ENCODE measurements at regions of chr21 and their contacts with region 1.

Region 1: DNA sequence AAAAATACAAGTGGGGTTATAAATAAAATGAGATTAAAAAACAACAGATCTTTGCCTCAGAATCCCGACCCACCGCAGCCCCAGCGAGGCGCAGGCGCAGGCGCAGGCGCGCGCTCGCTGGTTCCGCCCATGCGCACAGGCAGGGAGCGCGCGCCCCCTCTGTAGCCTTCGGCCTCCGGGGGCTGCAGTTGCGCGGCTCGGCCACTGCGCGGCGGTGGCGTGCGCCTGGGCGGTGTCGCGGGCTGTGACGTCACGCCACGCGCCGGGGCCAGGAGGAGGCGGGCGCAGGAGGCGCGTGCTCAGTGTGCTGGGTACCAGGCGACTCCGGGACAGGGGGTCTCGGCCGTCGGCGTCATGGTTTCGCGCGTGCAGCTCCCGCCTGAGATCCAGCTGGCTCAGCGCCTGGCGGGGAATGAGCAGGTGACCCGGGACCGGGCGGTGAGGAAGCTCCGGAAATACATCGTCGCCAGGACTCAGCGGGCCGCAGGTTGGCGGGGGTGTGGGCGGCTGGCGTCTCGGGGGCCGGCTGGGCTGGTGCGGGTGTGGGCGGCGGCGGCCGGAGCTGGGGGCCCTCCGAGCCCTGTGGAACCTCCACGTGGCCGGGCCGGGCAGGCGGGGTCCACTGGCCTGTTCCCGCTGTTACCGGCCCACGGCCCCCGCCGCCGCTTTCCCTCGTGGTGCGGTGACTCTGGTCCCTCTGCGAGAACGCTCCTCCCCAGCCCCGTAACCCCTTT is at the start of gene RRP1:
- DNase-seq: peak; percentile 59
- ATAC-seq: peak; percentile 94
- H3K4me3 ChIP-seq: peak within 1 kb of the TSS; percentile 97
- H3K27ac ChIP-seq: peak within 1 kb of the TSS; percentile 62
- H3K4me1 ChIP-seq: 0 out of 2 replicates have a peak, but pooled peaks cover 3% of the 10 kb centered on the region
- H3K27me3 ChIP-seq: no peaks in the 10 kb centered on the region
- CTCF ChIP-seq: peak; percentile 88 to 100 (median 99); a peak in 5 of 6 replicates
- EP300 ChIP-seq: 0 out of 4 replicates have a peak, but pooled peaks of 1 of the 2 experiments have one; percentile 17
- POLR2A ChIP-seq: peak; percentile 95
- RAD21 ChIP-seq: peak; percentile 34; the same call in 1 of the 2 replicates
- polyA plus RNA-seq, gene RRP1: 0.34 to 4.3 TPM

Region 2: GRCh38 chr21:43805275-43805800 is 15.9 kb after region 1 on chr21:
- CTCF ChIA-PET with region 1: interaction called, 4 read pairs
- POLR2A ChIA-PET with region 1: interaction called, 4 read pairs
- RAD21 ChIA-PET with region 1: interaction called, 8 read pairs
- SMC1A ChIA-PET with region 1: interaction called, 4 read pairs
- in situ Hi-C with region 1: no loop called
- intact Hi-C with region 1: loop called (anchors 1 kb)
- DNase-seq: peak; percentile 98
- ATAC-seq: peak; percentile 94
- H3K4me3 ChIP-seq: no peak overlapping the region
- H3K27ac ChIP-seq: peak overlapping the region; percentile 98
- H3K4me1 ChIP-seq: peaks cover 49% of the 10 kb centered on the region
- H3K27me3 ChIP-seq: no peaks in the 10 kb centered on the region
- CTCF ChIP-seq: no peak
- EP300 ChIP-seq: peak; percentile 88 to 94; a peak in 3 of 4 replicates
- POLR2A ChIP-seq: no peak
- RAD21 ChIP-seq: no peak

Measured in GM12878 (cell line).